Calu3 (cell line): ENCODE measurements at regions of chr14 and their contacts with region 1.

Region 1: DNA sequence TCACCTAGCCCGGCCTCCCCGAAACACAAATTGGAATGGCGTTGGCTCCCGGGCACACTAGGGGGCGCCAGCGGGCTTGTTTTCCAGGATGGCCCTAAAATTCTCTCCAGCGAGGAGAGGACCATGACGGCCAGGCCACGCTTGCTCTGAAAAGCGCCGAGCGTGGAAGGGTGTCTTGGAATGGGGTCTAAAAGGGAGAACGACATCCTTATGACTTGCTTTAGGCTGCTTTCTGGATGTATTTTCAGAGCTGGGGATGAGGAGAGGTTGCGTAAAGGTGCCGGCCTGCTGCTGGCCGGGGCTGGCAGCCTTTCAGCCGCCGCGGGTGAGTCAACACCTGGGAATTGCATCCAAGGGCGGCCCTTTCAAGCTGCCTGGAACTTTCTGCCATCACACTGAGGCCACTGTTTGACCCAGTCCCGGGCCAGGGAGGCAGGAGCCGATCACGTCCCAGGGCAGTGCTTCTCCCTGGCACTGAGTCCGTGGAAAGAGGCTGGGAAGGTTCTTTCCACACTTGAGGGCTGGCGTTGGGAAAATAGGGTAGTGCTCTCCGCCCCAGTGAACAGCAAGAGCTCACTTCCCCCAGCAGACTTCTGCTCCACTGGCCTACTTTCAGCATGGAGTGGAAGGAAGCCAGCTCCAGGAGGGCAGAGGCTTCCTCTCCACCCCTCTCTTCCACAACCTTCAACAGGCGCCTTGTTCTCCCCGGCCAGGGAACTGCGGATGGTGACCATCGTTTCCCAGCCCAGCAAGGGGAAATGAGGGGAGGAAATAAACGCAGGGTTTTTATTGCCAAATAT is 216.2 kb downstream of the TTC8 start:
- DNase-seq: peak; percentile 89
- H3K4me3 Mint-ChIP-seq: peak overlapping the region; percentile 74
- H3K27ac Mint-ChIP-seq: peak overlapping the region; percentile 41
- H3K4me1 Mint-ChIP-seq: peaks cover 9% of the 10 kb centered on the region
- H3K27me3 Mint-ChIP-seq: peaks cover 20% of the 10 kb centered on the region
- CTCF ChIP-seq: peak; percentile 87

Region 2: DNA sequence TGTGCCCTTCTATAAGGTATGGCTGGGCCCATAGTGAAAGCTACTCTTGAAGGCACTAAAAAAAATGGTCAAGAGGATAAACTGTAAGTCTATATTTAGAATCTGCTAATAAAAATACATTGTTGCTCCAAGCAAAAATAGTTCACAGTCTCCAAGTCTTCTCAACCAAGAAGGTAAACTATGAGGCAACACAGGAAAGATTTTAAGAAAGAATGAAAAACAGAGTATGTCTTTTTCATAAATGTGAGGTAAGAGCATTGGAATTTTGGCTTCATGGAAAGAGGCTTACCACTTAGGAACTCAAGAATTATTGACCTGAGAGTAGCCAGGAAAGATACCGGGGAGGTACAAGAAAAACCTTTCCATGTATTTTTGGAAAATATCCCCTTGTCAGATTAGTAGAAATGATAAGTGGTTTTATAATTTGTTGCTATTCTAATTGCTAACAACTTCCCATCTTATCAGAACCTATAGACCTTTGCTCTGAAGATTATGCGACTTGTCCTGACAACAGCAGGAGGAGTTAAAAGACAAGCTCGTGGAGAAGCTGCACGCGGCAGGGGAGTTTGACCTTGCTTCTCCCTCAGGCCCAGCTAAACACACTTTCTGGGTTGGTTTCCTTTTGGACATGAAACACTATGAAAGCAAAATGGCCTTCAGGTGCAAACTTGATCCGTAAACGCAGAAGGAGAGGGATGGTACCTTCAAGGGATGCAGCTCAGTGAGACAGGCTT is 138.3 kb after region 1 on chr14:
- CTCF ChIA-PET with region 1: no interaction called
- intact Hi-C with region 1: loop called (anchors 5 kb)
- DNase-seq: no peak
- H3K4me3 Mint-ChIP-seq: no peak overlapping the region
- H3K27ac Mint-ChIP-seq: no peak overlapping the region
- H3K4me1 Mint-ChIP-seq: no peaks in the 10 kb centered on the region
- H3K27me3 Mint-ChIP-seq: no peaks in the 10 kb centered on the region
- CTCF ChIP-seq: no peak

Region 3: DNA sequence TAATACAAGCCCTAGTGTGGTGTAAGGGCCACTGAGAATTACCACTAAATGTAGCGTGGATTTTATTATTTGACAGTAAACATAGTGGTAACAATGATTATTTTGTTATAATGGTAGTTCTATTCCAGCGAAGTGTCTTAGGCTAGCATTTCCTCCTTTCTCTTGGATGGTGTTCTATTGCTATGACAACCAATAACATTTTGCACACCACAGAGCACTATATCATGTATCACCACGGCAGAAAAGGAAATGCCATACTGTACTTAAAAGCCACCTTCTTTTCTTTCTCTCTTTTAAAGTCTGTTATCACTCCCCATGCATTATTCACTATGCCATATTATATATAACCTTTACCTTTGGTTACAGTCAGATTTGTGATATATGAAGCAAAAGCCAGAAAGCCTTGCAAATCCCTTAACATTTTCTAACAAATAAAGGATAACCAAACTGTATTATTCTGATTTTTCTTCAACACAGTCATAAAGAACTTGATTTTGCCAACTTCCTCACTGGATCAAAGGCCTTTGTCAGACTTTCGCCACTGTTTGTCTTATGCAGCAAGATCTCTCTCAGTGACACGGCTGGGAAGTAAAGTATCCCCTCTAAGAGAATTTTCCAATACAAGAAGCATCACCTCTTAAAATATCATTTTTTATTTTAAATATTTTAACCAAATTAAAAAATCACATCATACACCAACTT is 180.6 kb after region 1 on chr14:
- CTCF ChIA-PET with region 1: no interaction called
- intact Hi-C with region 1: no loop called
- DNase-seq: no peak
- H3K4me3 Mint-ChIP-seq: no peak overlapping the region
- H3K27ac Mint-ChIP-seq: no peak overlapping the region
- H3K4me1 Mint-ChIP-seq: no peaks in the 10 kb centered on the region
- H3K27me3 Mint-ChIP-seq: no peaks in the 10 kb centered on the region
- CTCF ChIP-seq: no peak

Region 4: GRCh38 chr14:89422181-89422951 is 381.7 kb after region 1 on chr14:
- CTCF ChIA-PET with region 1: no interaction called
- intact Hi-C with region 1: loop called (anchors 5 kb)
- DNase-seq: peak; percentile 1
- H3K4me3 Mint-ChIP-seq: no peak overlapping the region
- H3K27ac Mint-ChIP-seq: no peak overlapping the region
- H3K4me1 Mint-ChIP-seq: peaks cover 16% of the 10 kb centered on the region
- H3K27me3 Mint-ChIP-seq: no peaks in the 10 kb centered on the region
- CTCF ChIP-seq: no peak

Region 5: DNA sequence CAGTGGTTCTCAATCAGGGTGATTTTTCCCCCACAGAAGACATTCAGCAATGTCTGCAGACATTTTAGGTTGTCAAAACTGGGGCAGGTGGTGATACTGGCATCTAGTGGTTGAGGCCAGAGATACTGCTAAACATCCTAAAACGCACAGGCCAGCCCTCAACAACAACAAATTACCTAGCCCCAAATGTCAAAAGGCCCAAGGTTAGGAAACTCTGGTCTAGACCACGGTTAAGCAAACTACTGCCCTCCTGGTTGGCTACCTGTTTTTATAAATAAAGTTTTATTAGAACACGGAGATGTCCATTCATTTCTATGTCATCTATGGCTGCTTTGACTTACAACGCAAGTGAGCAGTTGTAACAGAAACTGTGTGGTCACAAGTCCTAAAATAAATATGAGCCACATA is 727.2 kb after region 1 on chr14:
- CTCF ChIA-PET with region 1: no interaction called
- intact Hi-C with region 1: loop called (anchors 1 kb)
- DNase-seq: peak; percentile 25
- H3K4me3 Mint-ChIP-seq: no peak overlapping the region
- H3K27ac Mint-ChIP-seq: no peak overlapping the region
- H3K4me1 Mint-ChIP-seq: no peaks in the 10 kb centered on the region
- H3K27me3 Mint-ChIP-seq: no peaks in the 10 kb centered on the region
- CTCF ChIP-seq: no peak